Activated CD4-positive, alpha-beta T cell treated with anti-CD3 and anti-CD28 coated beads, Interleukin-2, amount 10 ng/mL, durations not matched to agents 24 days and 14 days (primary cell): ENCODE measurements at regions of chr14 and their contacts with region 1.

Region 1: DNA sequence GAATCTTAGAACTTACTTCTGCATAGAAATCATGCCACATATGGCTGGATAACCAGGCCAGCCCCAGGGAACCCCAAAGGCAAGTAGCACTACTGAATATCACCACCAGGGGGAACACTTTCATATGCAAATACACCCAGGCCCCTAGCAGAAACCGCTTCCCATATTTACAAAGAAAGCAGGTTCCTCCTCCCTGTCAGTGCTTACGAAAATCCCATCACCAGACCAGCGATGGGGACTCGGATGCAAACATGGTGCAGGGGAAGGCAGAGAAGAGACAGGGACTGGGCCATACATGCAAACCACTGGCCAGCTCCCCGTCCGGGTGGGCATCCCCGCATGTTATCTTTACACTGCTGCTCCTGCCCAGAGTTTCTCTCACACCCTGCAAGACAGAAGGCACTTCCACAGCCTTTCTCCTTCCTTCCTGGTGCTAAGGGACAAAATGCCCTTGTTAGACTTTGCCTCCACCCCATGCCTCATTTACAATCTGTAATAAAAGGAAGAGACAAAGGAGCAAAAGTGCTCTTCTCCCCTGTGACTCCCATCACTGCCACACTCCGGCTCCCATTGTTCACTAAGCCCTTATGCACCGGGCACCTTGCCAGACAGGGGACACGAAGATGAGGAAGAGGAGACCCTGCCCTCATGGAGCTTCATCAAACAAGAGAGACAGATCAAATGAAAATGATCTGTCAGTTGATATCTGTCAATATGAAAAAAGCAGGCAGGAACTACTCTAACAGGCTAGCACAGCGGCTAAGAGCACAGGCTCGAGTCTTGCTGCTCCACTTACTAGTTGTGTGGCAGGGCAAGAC is 62.3 kb downstream of the PTPN21 start:
- DNase-seq: peak; percentile 91
- H3K4me3 Mint-ChIP-seq: no peak overlapping the region
- H3K27ac Mint-ChIP-seq: no peak overlapping the region
- H3K4me1 Mint-ChIP-seq: peaks cover 5% of the 10 kb centered on the region
- H3K27me3 Mint-ChIP-seq: no peaks in the 10 kb centered on the region

Region 2: GRCh38 chr14:88710702-88711101 is 218.2 kb after region 1 on chr14:
- intact Hi-C with region 1: no loop called
- DNase-seq: no peak
- H3K4me3 Mint-ChIP-seq: no peak overlapping the region
- H3K27ac Mint-ChIP-seq: no peak overlapping the region
- H3K4me1 Mint-ChIP-seq: no peaks in the 10 kb centered on the region
- H3K27me3 Mint-ChIP-seq: no peaks in the 10 kb centered on the region

Region 3: DNA sequence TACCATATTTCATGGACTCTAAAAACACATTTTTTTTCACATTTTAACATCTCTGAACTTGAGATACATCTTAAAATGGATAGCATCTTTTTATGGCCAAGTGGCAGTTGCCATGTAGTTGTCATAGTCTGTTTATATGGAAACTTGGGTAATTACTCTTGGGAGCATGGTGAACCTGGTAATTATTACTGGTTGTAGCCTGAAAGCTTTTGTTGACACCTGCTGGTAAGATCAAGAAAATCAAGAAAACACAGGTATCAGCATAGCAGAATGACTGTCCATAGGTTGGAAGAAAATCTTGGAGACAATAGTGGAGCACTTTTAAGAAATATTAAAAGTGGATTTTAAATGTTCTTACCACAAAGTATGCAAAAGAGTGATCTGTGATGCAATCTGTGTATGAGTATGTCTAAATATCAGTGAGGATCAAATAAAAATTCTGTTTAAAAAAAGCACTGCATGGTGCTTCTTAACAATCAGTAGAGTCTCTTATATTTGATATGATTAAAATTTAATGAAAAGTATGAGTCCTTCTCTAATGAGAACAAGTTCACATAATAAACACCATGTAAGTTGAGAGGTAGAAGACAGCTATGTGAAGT is 376.2 kb after region 1 on chr14:
- intact Hi-C with region 1: loop called (anchors 10 kb)
- DNase-seq: no peak
- H3K4me3 Mint-ChIP-seq: no peak overlapping the region
- H3K27ac Mint-ChIP-seq: no peak overlapping the region
- H3K4me1 Mint-ChIP-seq: no peaks in the 10 kb centered on the region
- H3K27me3 Mint-ChIP-seq: no peaks in the 10 kb centered on the region